ENCODE measurements at regions of chr2 and their contacts with region 1.

Region 1: DNA sequence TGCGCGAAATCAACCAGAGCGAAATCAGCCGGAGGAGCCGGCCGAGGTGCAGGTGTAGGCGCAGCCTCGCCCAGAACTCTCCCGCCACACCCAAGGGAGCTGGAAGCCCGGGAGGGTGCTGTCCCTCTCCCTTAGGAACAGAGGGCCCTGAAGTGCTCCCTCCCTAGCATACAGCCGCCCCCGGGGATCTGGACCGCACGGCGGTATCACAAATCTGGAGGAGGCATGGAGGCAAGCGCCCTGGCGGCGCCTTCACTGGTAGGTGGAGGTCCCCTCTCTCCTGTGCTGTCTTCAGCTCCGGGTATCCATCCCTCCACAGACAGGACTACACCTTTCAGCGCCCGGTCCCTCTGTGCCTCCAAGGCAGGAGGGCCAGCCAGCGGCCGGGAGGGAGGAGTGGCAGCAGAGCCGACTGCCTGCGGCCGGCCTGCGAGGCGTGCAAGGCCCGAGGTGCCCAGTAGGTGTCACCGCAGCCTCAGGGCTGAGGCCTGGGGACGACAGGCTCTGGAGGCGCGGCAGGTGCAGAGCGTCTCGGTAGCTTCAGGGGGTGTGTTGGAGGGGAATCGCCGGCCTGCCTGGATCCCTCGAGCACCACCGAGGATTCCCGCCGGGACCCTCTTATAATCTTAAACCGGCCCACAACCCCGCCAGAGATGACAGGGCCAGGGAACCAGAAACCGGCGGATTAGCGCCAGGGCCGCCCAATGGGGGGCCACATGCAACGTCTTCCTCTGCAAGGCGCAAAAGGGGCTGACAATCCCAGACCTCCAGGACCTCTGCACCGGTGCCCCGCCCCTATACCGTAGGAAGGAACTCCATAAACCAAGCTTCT is 2.8 kb downstream of the IHH start:
- DNase-seq: peak; percentile 74 to 97 (median 79)

Region 2: GRCh38 chr2:219010162-219010756 is 47.7 kb before region 1 on chr2:
- intact Hi-C with region 1: no loop called
- DNase-seq: peak in 1 of 10 donors; percentile 85

Region 3: DNA sequence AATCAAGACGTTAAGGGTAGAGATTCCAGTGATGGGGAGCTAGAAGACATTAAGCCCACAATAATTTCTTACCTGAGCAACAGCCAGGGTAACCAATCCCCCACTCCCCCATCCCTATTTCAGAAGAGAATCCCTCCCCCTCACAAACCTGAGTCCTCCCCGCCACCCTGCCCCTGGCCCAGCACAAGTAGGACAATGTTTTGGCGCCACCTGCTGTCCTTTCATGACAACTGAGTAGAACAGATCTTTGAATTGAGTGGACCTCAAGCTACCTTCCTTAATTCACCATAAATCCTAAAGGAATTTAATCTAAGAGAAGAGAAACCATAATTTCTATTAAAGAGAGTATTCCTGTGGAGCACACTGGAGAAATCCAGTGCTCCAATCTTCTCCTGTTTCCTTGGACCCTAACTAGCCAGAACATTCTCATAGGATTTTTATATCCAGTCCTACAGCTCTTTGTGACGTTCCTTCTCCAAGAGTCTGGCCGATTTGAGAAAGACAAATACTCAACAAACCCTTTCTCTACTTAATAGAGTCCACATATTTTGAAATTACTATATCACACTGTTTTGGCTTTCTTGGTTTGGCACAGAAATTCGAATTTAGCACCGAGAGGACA is 61.6 kb after region 1 on chr2:
- intact Hi-C with region 1: loop called (anchors 1 kb)
- DNase-seq: peak; percentile 18 to 93 (median 74)

Region 4: DNA sequence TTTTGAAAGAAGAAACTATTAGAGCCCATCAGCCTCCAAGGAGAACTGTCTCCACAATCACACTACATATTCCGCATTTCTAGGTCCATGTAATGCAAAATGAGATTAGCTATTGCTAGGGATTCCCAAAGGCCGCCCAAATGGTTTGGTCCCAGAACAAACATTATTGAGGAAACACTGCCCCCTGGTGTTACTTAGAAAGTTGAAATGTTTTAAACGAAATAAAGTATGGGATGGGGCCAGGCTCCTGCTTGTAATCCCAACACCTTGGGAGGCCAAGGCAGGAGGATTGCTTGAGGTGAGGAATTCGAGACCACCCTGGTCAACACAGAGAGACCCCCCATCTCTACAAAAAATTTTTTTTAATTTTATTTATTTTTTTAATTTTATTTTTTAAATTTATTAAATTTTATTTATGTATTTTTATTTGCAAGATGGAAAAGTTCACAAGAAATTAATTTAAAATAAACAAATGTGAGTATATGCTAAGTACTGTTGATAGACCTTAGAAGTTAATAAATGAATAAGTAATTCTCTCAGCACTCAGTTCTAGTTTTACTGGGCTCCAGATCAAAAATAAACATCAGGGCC is 97.2 kb after region 1 on chr2:
- intact Hi-C with region 1: loop called (anchors 2 kb)
- DNase-seq: peak in 2 of 10 donors; percentile 5 to 28